ENCODE measurements at regions of chr3 and their contacts with region 1.

Region 1: DNA sequence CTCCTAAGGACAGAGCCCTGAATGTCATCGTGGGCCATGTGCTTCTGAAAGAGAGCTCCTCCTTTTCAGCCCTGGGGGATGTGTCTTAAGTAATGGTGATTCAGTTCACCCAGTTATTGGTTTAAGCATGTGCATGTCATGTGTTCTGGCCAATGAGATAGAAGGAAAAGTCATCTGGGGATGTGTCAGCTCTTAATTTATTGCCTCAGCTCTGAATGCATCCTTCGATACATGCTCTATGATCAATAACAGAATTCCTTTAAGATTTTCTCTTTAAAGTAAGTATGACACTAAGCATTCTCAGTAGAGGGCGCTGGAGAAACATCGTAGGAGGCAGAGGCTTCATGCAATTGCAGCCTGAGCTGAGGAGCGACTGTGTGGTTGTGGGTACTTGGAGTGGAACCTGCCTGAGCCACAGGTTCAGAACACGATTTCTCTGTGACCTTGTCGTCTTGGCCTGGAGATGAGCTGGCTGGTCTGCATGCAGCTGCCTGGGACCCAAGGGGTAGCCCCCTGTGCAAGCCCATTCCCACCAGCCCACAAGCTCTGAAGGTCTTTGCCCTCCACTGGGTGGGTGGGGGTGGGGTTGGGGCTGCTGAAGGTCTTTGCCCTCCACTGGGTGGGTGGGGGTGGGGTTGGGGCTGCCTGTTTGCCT is 69.5 kb downstream of the C3orf38 start:
- DNase-seq: peak; percentile 72
- H3K4me3 Mint-ChIP-seq: no peak overlapping the region
- H3K27ac Mint-ChIP-seq: no peak overlapping the region
- H3K4me1 Mint-ChIP-seq: peaks cover 4% of the 10 kb centered on the region
- H3K27me3 Mint-ChIP-seq: no peaks in the 10 kb centered on the region
- CTCF ChIP-seq: peak; percentile 73

Region 2: DNA sequence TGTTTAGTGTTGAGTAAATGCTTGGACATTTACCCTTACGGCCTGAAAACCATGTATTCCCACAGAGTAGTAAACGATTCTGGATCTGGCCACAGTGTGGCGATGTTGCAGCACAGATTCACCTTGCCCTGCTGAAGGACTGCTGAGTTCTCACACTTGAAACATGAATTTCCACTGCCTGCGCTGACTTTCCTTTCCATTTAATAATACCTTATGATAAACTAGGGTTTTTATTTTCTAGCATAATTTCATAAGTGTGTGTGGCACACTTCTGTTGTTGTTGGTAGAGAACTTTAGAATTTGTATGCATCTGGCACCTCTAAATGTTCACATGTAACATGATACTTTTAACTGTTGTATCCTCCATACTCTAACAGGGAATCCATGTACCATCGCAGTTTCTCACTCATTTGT is 15.6 kb before region 1 on chr3:
- CTCF ChIA-PET with region 1: interaction called, 20 read pairs
- POLR2A ChIA-PET with region 1: no interaction called
- intact Hi-C with region 1: no loop called
- DNase-seq: peak; percentile 75
- H3K4me3 Mint-ChIP-seq: no peak overlapping the region
- H3K27ac Mint-ChIP-seq: no peak overlapping the region
- H3K4me1 Mint-ChIP-seq: no peaks in the 10 kb centered on the region
- H3K27me3 Mint-ChIP-seq: no peaks in the 10 kb centered on the region
- CTCF ChIP-seq: peak; percentile 91

Region 3: GRCh38 chr3:88440701-88441100 is 221.4 kb after region 1 on chr3:
- CTCF ChIA-PET with region 1: no interaction called
- POLR2A ChIA-PET with region 1: no interaction called
- intact Hi-C with region 1: no loop called
- DNase-seq: no peak
- H3K4me3 Mint-ChIP-seq: no peak overlapping the region
- H3K27ac Mint-ChIP-seq: no peak overlapping the region
- H3K4me1 Mint-ChIP-seq: peaks cover 5% of the 10 kb centered on the region
- H3K27me3 Mint-ChIP-seq: no peaks in the 10 kb centered on the region
- CTCF ChIP-seq: no peak

Region 4: GRCh38 chr3:89098964-89099585 is 879.8 kb after region 1 on chr3:
- CTCF ChIA-PET with region 1: interaction called, 11 read pairs
- POLR2A ChIA-PET with region 1: no interaction called
- intact Hi-C with region 1: loop called (anchors 1 kb)
- DNase-seq: peak; percentile 60
- H3K4me3 Mint-ChIP-seq: no peak overlapping the region
- H3K27ac Mint-ChIP-seq: no peak overlapping the region
- H3K4me1 Mint-ChIP-seq: peaks cover 7% of the 10 kb centered on the region
- H3K27me3 Mint-ChIP-seq: no peaks in the 10 kb centered on the region
- CTCF ChIP-seq: peak; percentile 90

Region 5: GRCh38 chr3:89107461-89108290 is 888.4 kb after region 1 on chr3 and contains the start of gene EPHA3:
- CTCF ChIA-PET with region 1: interaction called, 15 read pairs
- POLR2A ChIA-PET with region 1: interaction called, 3 read pairs
- intact Hi-C with region 1: no loop called
- DNase-seq: peak; percentile 8
- H3K4me3 Mint-ChIP-seq: peak within 1 kb of the TSS; percentile 78
- H3K27ac Mint-ChIP-seq: no peak within 1 kb of the TSS
- H3K4me1 Mint-ChIP-seq: peaks cover 13% of the 10 kb centered on the region
- H3K27me3 Mint-ChIP-seq: peaks cover 14% of the 10 kb centered on the region
- CTCF ChIP-seq: no peak
- total RNA-seq, gene EPHA3: not detected in 2 replicates

Region 6: GRCh38 chr3:89113903-89114840 is 894.9 kb after region 1 on chr3:
- CTCF ChIA-PET with region 1: interaction called, 16 read pairs
- POLR2A ChIA-PET with region 1: interaction called, 3 read pairs
- intact Hi-C with region 1: loop called (anchors 1 kb)
- DNase-seq: peak; percentile 75
- H3K4me3 Mint-ChIP-seq: peak overlapping the region; percentile 85
- H3K27ac Mint-ChIP-seq: no peak overlapping the region
- H3K4me1 Mint-ChIP-seq: no peaks in the 10 kb centered on the region
- H3K27me3 Mint-ChIP-seq: peaks cover 35% of the 10 kb centered on the region
- CTCF ChIP-seq: peak; percentile 60

Region 7: GRCh38 chr3:89314454-89315098 is 1095.3 kb after region 1 on chr3:
- CTCF ChIA-PET with region 1: interaction called, 4 read pairs
- POLR2A ChIA-PET with region 1: no interaction called
- intact Hi-C with region 1: loop called (anchors 10 kb)
- DNase-seq: peak; percentile 51
- H3K4me3 Mint-ChIP-seq: no peak overlapping the region
- H3K27ac Mint-ChIP-seq: no peak overlapping the region
- H3K4me1 Mint-ChIP-seq: no peaks in the 10 kb centered on the region
- H3K27me3 Mint-ChIP-seq: peaks cover 51% of the 10 kb centered on the region
- CTCF ChIP-seq: peak; percentile 21

Measured in MCF 10A (cell line).